ENCODE measurements at regions of chr15 and their contacts with region 1.

Region 1: DNA sequence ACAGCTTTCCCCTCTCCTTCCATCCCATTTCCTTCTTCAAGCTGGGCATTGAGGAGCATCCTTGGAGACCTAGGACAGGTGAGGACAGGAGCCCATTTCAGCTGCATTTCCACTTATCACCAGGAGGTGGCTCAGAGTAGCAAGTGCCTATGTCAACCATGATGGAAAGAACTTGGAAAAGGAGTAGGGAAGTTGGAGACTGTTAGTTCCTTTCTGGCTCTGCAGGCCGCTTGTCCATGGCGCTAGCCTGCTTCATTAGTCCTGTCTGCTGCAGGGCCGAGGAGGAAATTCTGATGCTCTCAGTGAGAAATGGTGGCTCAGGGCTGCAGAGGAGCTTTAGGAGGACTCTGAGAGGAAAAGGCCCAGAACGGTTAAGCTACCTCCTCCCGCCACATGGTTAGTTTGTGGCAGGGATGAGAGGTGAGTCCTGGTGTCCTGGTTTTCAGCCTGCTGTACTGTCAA is 7.0 kb upstream of the CD276 start:
- DNase-seq: no peak
- ATAC-seq: peak; percentile 78
- H3K4me3 ChIP-seq: no peak overlapping the region
- H3K27ac ChIP-seq: no peak overlapping the region
- H3K4me1 ChIP-seq: no peaks in the 10 kb centered on the region
- H3K27me3 ChIP-seq: peaks cover 2% of the 10 kb centered on the region in 2 experiments; a peak in 2 of 4 replicates
- CTCF ChIP-seq: peak; percentile 73 to 89 (median 82)
- EP300 ChIP-seq: no peak
- POLR2A ChIP-seq: no peak
- RAD21 ChIP-seq: peak; percentile 59

Region 2: DNA sequence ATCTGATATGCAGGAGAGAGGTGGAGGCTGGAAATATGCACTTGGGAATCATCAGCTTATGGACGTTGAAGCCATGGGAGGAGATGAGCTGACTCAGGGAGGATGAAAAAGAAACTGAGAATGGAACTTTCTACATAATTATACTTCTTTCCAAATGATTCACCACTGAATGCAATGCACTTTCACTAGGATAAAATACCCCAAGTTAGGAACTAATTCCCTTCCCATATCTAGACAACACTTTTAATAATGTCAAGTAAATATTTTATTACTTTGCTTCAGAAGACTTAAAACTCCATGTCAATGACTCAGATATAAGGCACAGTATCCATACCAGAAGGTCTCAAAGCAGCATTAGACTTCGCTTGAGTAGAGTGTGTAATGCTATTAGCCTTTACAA is 68.2 kb before region 1 on chr15:
- CTCF ChIA-PET with region 1: no interaction called
- POLR2A ChIA-PET with region 1: no interaction called
- RAD21 ChIA-PET with region 1: no interaction called
- SMC1A ChIA-PET with region 1: no interaction called
- in situ Hi-C with region 1: no loop called
- intact Hi-C with region 1: no loop called
- DNase-seq: no peak
- ATAC-seq: peak; percentile 59
- H3K4me3 ChIP-seq: no peak overlapping the region
- H3K27ac ChIP-seq: 0 out of 2 replicates have a peak overlapping the region, but pooled peaks have one; percentile 16
- H3K4me1 ChIP-seq: peaks cover 27% of the 10 kb centered on the region; the same call in 1 of the 2 replicates
- H3K27me3 ChIP-seq: no peaks in the 10 kb centered on the region
- CTCF ChIP-seq: no peak
- EP300 ChIP-seq: no peak
- POLR2A ChIP-seq: no peak
- RAD21 ChIP-seq: no peak

Region 3: GRCh38 chr15:73660455-73660854 is 16.7 kb before region 1 on chr15:
- CTCF ChIA-PET with region 1: interaction called, 14 read pairs
- POLR2A ChIA-PET with region 1: no interaction called
- RAD21 ChIA-PET with region 1: no interaction called
- SMC1A ChIA-PET with region 1: no interaction called
- in situ Hi-C with region 1: no loop called
- intact Hi-C with region 1: no loop called
- DNase-seq: no peak
- ATAC-seq: no peak
- H3K4me3 ChIP-seq: no peak overlapping the region
- H3K27ac ChIP-seq: no peak overlapping the region
- H3K4me1 ChIP-seq: no peaks in the 10 kb centered on the region
- H3K27me3 ChIP-seq: no peaks in the 10 kb centered on the region; a peak in 1 of 4 replicates
- CTCF ChIP-seq: no peak
- EP300 ChIP-seq: no peak
- POLR2A ChIP-seq: no peak
- RAD21 ChIP-seq: no peak

Region 4: GRCh38 chr15:73704869-73705645 is 27.9 kb after region 1 on chr15:
- CTCF ChIA-PET with region 1: interaction called, 103 read pairs
- POLR2A ChIA-PET with region 1: no interaction called
- RAD21 ChIA-PET with region 1: interaction called, 19 read pairs
- SMC1A ChIA-PET with region 1: interaction called, 45 read pairs
- in situ Hi-C with region 1: no loop called
- intact Hi-C with region 1: loop called (anchors 1 kb)
- DNase-seq: no peak
- ATAC-seq: peak; percentile 91
- H3K4me3 ChIP-seq: no peak overlapping the region
- H3K27ac ChIP-seq: no peak overlapping the region
- H3K4me1 ChIP-seq: no peaks in the 10 kb centered on the region
- H3K27me3 ChIP-seq: no peaks in the 10 kb centered on the region; a peak in 1 of 4 replicates
- CTCF ChIP-seq: peak; percentile 82 to 88 (median 86)
- EP300 ChIP-seq: no peak
- POLR2A ChIP-seq: no peak
- RAD21 ChIP-seq: peak; percentile 57

Region 5: GRCh38 chr15:73727330-73727976 is 50.3 kb after region 1 on chr15:
- CTCF ChIA-PET with region 1: no interaction called
- POLR2A ChIA-PET with region 1: no interaction called
- RAD21 ChIA-PET with region 1: no interaction called
- SMC1A ChIA-PET with region 1: no interaction called
- in situ Hi-C with region 1: no loop called
- intact Hi-C with region 1: no loop called
- DNase-seq: no peak
- ATAC-seq: no peak
- H3K4me3 ChIP-seq: no peak overlapping the region
- H3K27ac ChIP-seq: no peak overlapping the region
- H3K4me1 ChIP-seq: no peaks in the 10 kb centered on the region
- H3K27me3 ChIP-seq: peaks cover 1 to 3% of the 10 kb centered on the region in 2 experiments
- CTCF ChIP-seq: no peak
- EP300 ChIP-seq: no peak
- POLR2A ChIP-seq: no peak
- RAD21 ChIP-seq: no peak

Measured in GM12878 (cell line).